Transverse colon (tissue), 4 donors: ENCODE measurements at regions of chr19 and their contacts with region 1.

Region 1: GRCh38 chr19:18809150-18809868 is 18.2 kb upstream of the COMP start:
- DNase-seq: peak; percentile 36
- H3K4me3 ChIP-seq: no peak overlapping the region
- H3K27ac ChIP-seq: peak overlapping the region in 3 of 4 donors; percentile 26 to 57 (median 31)
- H3K4me1 ChIP-seq: peaks cover 0 to 4% (median 2%) of the 10 kb centered on the region in 4 donors
- H3K27me3 ChIP-seq: peaks cover 3% of the 10 kb centered on the region
- CTCF ChIP-seq: no peak
- EP300 ChIP-seq: no peak
- POLR2A ChIP-seq: no peak

Region 2: DNA sequence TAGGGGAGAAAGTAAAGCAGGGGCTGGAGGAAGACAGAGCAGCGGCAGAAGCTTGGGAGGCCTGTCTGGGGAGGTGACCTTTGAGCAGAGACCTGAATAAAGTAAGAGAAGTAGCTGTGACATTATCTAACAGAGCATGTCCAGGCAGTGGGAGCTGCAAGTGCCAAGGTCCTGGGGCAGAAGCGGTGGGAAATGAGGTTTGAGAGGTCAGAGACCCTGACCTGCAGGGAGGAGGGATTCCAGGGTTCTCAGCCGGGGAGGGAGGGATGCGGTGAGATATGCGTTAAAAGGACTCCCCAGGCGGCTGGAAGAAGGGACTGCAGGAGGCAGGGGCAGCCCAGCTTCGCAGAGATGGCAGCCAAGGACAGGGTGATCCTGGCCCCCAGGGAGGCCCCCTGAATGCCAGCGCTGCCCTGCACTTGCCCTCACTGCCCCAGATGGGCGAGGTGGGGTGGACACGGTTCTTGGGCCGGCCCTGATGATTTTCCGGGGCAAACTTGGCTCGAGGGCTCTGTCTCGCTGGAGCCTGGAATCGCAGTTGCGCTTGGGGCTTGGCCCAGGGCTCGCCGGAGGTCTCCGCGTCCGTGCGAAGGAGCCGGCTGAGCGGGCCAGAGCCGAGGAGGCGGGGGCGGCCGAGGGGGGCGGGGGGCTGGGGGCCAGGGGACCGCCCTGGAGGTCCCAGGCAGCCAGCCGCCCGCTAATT is 205.9 kb before region 1 on chr19:
- in situ Hi-C with region 1: loop called in 1 of 4 experiments (anchors 25 kb)
- intact Hi-C with region 1: no loop called
- DNase-seq: no peak
- H3K4me3 ChIP-seq: no peak overlapping the region
- H3K27ac ChIP-seq: no peak overlapping the region
- H3K4me1 ChIP-seq: peaks cover 7 to 26% (median 16%) of the 10 kb centered on the region in 4 donors
- H3K27me3 ChIP-seq: peaks cover 96% of the 10 kb centered on the region
- CTCF ChIP-seq: peak in 2 of 5 experiments; percentile 19 to 26
- EP300 ChIP-seq: no peak
- POLR2A ChIP-seq: no peak

Region 3: GRCh38 chr19:18865973-18866799 is 56.9 kb after region 1 on chr19:
- in situ Hi-C with region 1: no loop called
- intact Hi-C with region 1: no loop called
- DNase-seq: peak; percentile 62
- H3K4me3 ChIP-seq: no peak overlapping the region
- H3K27ac ChIP-seq: no peak overlapping the region
- H3K4me1 ChIP-seq: peaks cover 0 to 15% (median 12%) of the 10 kb centered on the region in 4 donors
- H3K27me3 ChIP-seq: peaks cover 19% of the 10 kb centered on the region
- CTCF ChIP-seq: peak; percentile 87 to 99 (median 98)
- EP300 ChIP-seq: no peak
- POLR2A ChIP-seq: no peak